Activated CD8-positive, alpha-beta T cell treated with anti-CD3 and anti-CD28 coated beads, Interleukin-2, amount 10 ng/mL, durations not matched to agents 7 days and 5 days (primary cell): ENCODE measurements at regions of chr2 and their contacts with region 1.

Region 1: DNA sequence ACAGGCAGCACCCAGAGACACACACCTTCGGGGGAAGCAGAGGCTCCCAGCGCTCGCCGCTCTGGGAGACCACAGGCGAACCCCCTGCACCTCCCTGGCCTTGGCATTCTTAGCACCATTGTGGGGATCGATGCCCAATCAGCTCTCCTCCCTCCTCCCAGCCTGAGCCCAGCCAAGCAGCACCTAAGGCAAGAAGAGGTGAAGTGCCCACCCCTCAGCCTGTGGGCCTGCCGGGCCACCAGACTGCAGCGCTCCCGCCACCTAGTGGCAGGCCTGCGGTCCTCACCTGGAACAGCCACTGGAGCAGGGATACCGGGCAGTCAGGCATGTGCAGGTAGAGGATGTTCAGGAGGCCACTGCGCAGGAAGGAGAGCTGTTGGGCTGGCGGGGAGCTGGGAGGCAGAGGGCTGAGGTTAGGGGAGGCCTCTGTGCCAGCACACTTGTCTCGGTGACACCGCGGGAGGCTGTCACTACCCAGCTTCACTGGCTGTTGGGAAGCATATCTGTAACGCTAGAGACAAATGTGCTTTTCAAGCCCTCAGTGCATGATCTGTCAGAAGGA is 35.2 kb downstream of the FAM178B start:
- DNase-seq: peak; percentile 82
- ATAC-seq: peak; percentile 93
- H3K4me3 Mint-ChIP-seq: no peak overlapping the region
- H3K27ac Mint-ChIP-seq: no peak overlapping the region
- H3K4me1 Mint-ChIP-seq: peaks cover 37% of the 10 kb centered on the region
- H3K27me3 Mint-ChIP-seq: peaks cover 3% of the 10 kb centered on the region

Region 2: GRCh38 chr2:96710985-96711384 is 240.2 kb before region 1 on chr2:
- CTCF ChIA-PET with region 1: no interaction called
- POLR2A ChIA-PET with region 1: no interaction called
- DNase-seq: no peak
- ATAC-seq: no peak
- H3K4me3 Mint-ChIP-seq: no peak overlapping the region
- H3K27ac Mint-ChIP-seq: no peak overlapping the region
- H3K4me1 Mint-ChIP-seq: no peaks in the 10 kb centered on the region
- H3K27me3 Mint-ChIP-seq: no peaks in the 10 kb centered on the region

Region 3: GRCh38 chr2:96868555-96869280 is 82.5 kb before region 1 on chr2:
- CTCF ChIA-PET with region 1: interaction called, 13 read pairs
- POLR2A ChIA-PET with region 1: interaction called, 3 read pairs
- DNase-seq: peak; percentile 80
- ATAC-seq: peak; percentile 47
- H3K4me3 Mint-ChIP-seq: peak overlapping the region; percentile 78
- H3K27ac Mint-ChIP-seq: peak overlapping the region; percentile 86
- H3K4me1 Mint-ChIP-seq: peaks cover 40% of the 10 kb centered on the region
- H3K27me3 Mint-ChIP-seq: peaks cover 4% of the 10 kb centered on the region

Region 4: GRCh38 chr2:96923810-96924774 is 27.1 kb before region 1 on chr2:
- CTCF ChIA-PET with region 1: interaction called, 21 read pairs
- POLR2A ChIA-PET with region 1: interaction called, 3 read pairs
- DNase-seq: peak; percentile 57
- ATAC-seq: peak; percentile 69
- H3K4me3 Mint-ChIP-seq: peak overlapping the region; percentile 74
- H3K27ac Mint-ChIP-seq: peak overlapping the region; percentile 93
- H3K4me1 Mint-ChIP-seq: peaks cover 46% of the 10 kb centered on the region
- H3K27me3 Mint-ChIP-seq: no peaks in the 10 kb centered on the region

Region 5: GRCh38 chr2:96940001-96940615 is 11.1 kb before region 1 on chr2:
- CTCF ChIA-PET with region 1: interaction called, 58 read pairs
- POLR2A ChIA-PET with region 1: no interaction called
- DNase-seq: no peak
- ATAC-seq: no peak
- H3K4me3 Mint-ChIP-seq: no peak overlapping the region
- H3K27ac Mint-ChIP-seq: peak overlapping the region; percentile 20
- H3K4me1 Mint-ChIP-seq: peaks cover 46% of the 10 kb centered on the region
- H3K27me3 Mint-ChIP-seq: no peaks in the 10 kb centered on the region

Region 6: GRCh38 chr2:96985181-96985945 is 34.2 kb after region 1 on chr2:
- CTCF ChIA-PET with region 1: no interaction called
- POLR2A ChIA-PET with region 1: no interaction called
- DNase-seq: no peak
- ATAC-seq: no peak
- H3K4me3 Mint-ChIP-seq: no peak overlapping the region
- H3K27ac Mint-ChIP-seq: no peak overlapping the region
- H3K4me1 Mint-ChIP-seq: no peaks in the 10 kb centered on the region
- H3K27me3 Mint-ChIP-seq: peaks cover 2% of the 10 kb centered on the region